Dorsolateral prefrontal cortex (tissue), 120 donors: ENCODE measurements at regions of chr1 and their contacts with region 1.

Region 1: GRCh38 chr1:209627732-209628196 is 24.5 kb downstream of the LAMB3 start:
- DNase-seq: peak; percentile 72 to 91 (median 84)
- H3K4me3 ChIP-seq: peak overlapping the region in 15 of 59 donors; percentile 3 to 45 (median 26)
- H3K27ac ChIP-seq: peak overlapping the region in 21 of 59 donors; percentile 2 to 70 (median 44)
- H3K27me3 ChIP-seq: no peaks in the 10 kb centered on the region
- CTCF ChIP-seq: peak; percentile 89 to 100 (median 99)

Region 2: GRCh38 chr1:209576798-209577197 is 51.0 kb before region 1 on chr1:
- intact Hi-C with region 1: loop called in 1 of 2 experiments (anchors 2 kb)
- DNase-seq: peak; percentile 68 to 88 (median 82)
- H3K4me3 ChIP-seq: no peak overlapping the region
- H3K27ac ChIP-seq: peak overlapping the region in 1 of 59 donors; percentile 3
- H3K27me3 ChIP-seq: peaks cover 0 to 21% (median 0%) of the 10 kb centered on the region in 45 donors
- CTCF ChIP-seq: peak; percentile 73 to 99 (median 93)

Region 3: GRCh38 chr1:209585672-209586071 is 42.1 kb before region 1 on chr1:
- intact Hi-C with region 1: loop called (anchors 5 kb)
- DNase-seq: peak; percentile 49 to 87 (median 82)
- H3K4me3 ChIP-seq: peak overlapping the region; percentile 16 to 73 (median 56)
- H3K27ac ChIP-seq: peak overlapping the region in 23 of 59 donors; percentile 4 to 90 (median 51)
- H3K27me3 ChIP-seq: peaks cover 0 to 38% (median 0%) of the 10 kb centered on the region in 45 donors
- CTCF ChIP-seq: peak in 36 of 56 donors; percentile 8 to 56 (median 28)

Region 4: DNA sequence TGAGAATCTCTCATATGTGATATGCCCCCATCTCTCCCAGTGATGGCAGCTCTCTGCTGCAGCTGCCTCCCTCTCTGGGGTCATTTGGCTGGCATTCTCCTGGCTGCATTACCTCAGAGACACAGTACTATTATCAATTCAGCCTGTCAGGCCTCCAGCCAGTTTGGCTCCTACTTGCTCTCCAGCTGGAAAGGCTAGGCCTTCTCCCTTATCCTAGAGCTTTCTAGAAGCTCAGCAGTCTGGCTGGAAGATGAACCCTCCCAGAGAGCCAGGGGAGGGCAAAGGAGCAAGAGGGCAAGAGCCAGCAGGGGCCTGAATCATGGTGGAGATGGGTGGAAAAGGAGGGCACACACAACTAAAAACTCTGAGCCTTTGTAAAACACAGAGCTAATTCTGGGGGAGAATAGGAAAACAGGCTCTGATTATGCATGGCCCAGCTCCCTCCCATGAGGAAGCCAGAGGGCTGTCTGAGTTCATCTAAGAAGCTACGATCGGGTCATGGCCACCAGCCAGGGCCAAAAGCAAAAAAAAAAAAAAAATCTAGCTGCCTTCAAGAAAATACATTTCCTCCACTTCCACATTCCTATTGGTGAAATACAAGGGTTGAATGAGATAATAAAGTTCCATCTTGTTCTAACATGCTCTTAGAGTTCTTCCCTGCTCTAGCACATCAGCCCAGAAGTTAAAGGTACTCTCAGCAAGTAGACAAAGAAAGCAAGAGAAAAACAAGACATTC is 15.7 kb after region 1 on chr1:
- intact Hi-C with region 1: loop called in 1 of 2 experiments (anchors 1 kb)
- DNase-seq: peak; percentile 22 to 87 (median 77)
- H3K4me3 ChIP-seq: no peak overlapping the region
- H3K27ac ChIP-seq: peak overlapping the region; percentile 33 to 96 (median 88)
- H3K27me3 ChIP-seq: no peaks in the 10 kb centered on the region
- CTCF ChIP-seq: peak in 39 of 56 donors; percentile 5 to 63 (median 31)